ENCODE measurements at regions of chr2 and their contacts with region 1.

Region 1: GRCh38 chr2:148362144-148362796 is 282.3 kb upstream of the EPC2 start:
- DNase-seq: no peak
- ATAC-seq: no peak
- H3K4me3 ChIP-seq: no peak overlapping the region
- H3K4me3 Mint-ChIP-seq: no peak overlapping the region
- H3K27ac ChIP-seq: no peak overlapping the region
- H3K27ac Mint-ChIP-seq: no peak overlapping the region
- H3K4me1 ChIP-seq: no peaks in the 10 kb centered on the region
- H3K4me1 Mint-ChIP-seq: peaks cover 2% of the 10 kb centered on the region
- H3K27me3 ChIP-seq: no peaks in the 10 kb centered on the region
- H3K27me3 Mint-ChIP-seq: no peaks in the 10 kb centered on the region
- CTCF ChIP-seq: no peak

Region 2: GRCh38 chr2:148167855-148168254 is 194.4 kb before region 1 on chr2:
- CTCF ChIA-PET with region 1: no interaction called
- POLR2A ChIA-PET with region 1: no interaction called
- intact Hi-C with region 1: no loop called
- DNase-seq: no peak
- ATAC-seq: no peak
- H3K4me3 ChIP-seq: no peak overlapping the region
- H3K4me3 Mint-ChIP-seq: no peak overlapping the region
- H3K27ac ChIP-seq: no peak overlapping the region
- H3K27ac Mint-ChIP-seq: no peak overlapping the region
- H3K4me1 ChIP-seq: no peaks in the 10 kb centered on the region
- H3K4me1 Mint-ChIP-seq: peaks cover 3% of the 10 kb centered on the region
- H3K27me3 ChIP-seq: no peaks in the 10 kb centered on the region
- H3K27me3 Mint-ChIP-seq: no peaks in the 10 kb centered on the region
- CTCF ChIP-seq: no peak

Region 3: DNA sequence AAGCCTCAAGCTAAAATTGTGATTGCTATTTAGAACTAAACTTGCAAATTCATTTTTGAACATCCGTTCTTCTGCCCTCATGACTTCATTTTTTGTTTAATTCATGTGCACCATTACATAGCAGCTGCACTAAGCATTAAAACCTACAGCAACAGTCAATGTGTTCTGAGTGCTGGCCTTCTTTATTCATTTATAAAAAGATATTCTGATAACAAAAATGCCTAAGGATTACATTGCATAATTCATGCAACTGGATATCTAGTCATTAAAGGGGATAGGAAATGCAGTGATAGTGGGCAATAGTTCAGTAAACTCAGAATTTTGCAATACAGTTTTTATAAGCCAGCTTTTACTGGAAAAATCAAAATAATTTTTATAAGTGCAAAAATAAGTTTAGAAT is 12.1 kb before region 1 on chr2:
- CTCF ChIA-PET with region 1: no interaction called
- POLR2A ChIA-PET with region 1: no interaction called
- intact Hi-C with region 1: no loop called
- DNase-seq: no peak
- ATAC-seq: no peak
- H3K4me3 ChIP-seq: no peak overlapping the region
- H3K4me3 Mint-ChIP-seq: no peak overlapping the region
- H3K27ac ChIP-seq: no peak overlapping the region
- H3K27ac Mint-ChIP-seq: no peak overlapping the region
- H3K4me1 ChIP-seq: no peaks in the 10 kb centered on the region
- H3K4me1 Mint-ChIP-seq: no peaks in the 10 kb centered on the region
- H3K27me3 ChIP-seq: no peaks in the 10 kb centered on the region
- H3K27me3 Mint-ChIP-seq: no peaks in the 10 kb centered on the region
- CTCF ChIP-seq: no peak

Region 4: DNA sequence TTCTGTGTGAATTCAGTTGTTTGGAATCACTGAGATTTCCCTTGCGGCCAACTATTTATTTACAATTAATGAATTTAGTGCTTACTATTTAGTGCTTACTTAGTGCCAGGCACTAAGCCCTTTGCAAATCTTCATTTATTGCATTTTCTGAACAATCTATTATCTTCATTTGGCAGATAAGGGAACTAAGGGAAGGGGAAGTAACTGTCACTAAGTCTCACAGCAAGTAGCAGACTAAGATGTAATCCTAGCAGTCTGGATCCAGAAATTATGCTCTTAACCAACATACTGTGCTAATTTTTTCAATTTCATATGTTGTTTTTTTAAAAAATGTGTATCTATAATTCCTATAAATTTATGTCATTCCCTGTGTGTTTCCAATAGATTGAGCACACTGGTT is 67.8 kb after region 1 on chr2:
- CTCF ChIA-PET with region 1: no interaction called
- POLR2A ChIA-PET with region 1: no interaction called
- intact Hi-C with region 1: loop called in 1 of 2 experiments (anchors 2 kb)
- DNase-seq: no peak
- ATAC-seq: no peak
- H3K4me3 ChIP-seq: no peak overlapping the region
- H3K4me3 Mint-ChIP-seq: no peak overlapping the region
- H3K27ac ChIP-seq: no peak overlapping the region
- H3K27ac Mint-ChIP-seq: no peak overlapping the region
- H3K4me1 ChIP-seq: no peaks in the 10 kb centered on the region
- H3K4me1 Mint-ChIP-seq: peaks cover 17% of the 10 kb centered on the region
- H3K27me3 ChIP-seq: no peaks in the 10 kb centered on the region
- H3K27me3 Mint-ChIP-seq: no peaks in the 10 kb centered on the region
- CTCF ChIP-seq: no peak

Region 5: DNA sequence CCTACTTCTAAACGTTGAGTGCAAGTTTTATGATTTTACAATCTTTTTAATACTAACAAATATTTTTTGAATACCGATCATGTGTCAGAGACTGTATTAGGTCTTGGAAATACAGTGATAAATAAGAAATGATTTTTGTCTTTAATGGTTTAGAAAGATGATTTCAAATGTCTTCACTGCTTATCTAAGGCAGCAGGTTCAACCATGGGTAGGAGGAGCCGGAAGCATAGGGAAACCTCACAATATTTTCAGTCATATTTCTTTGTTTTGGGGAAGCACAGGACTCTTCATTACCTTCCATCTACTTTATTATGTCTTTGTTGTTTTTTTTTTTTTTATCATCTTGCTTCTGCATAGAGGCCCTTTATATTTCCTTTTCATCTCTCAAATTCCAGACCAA is 117.1 kb after region 1 on chr2:
- CTCF ChIA-PET with region 1: no interaction called
- POLR2A ChIA-PET with region 1: no interaction called
- intact Hi-C with region 1: no loop called
- DNase-seq: no peak
- ATAC-seq: no peak
- H3K4me3 ChIP-seq: no peak overlapping the region
- H3K4me3 Mint-ChIP-seq: no peak overlapping the region
- H3K27ac ChIP-seq: no peak overlapping the region
- H3K27ac Mint-ChIP-seq: no peak overlapping the region
- H3K4me1 ChIP-seq: no peaks in the 10 kb centered on the region
- H3K4me1 Mint-ChIP-seq: no peaks in the 10 kb centered on the region
- H3K27me3 ChIP-seq: no peaks in the 10 kb centered on the region
- H3K27me3 Mint-ChIP-seq: no peaks in the 10 kb centered on the region
- CTCF ChIP-seq: no peak